ENCODE measurements at regions of chr12 and their contacts with region 1.

Region 1: DNA sequence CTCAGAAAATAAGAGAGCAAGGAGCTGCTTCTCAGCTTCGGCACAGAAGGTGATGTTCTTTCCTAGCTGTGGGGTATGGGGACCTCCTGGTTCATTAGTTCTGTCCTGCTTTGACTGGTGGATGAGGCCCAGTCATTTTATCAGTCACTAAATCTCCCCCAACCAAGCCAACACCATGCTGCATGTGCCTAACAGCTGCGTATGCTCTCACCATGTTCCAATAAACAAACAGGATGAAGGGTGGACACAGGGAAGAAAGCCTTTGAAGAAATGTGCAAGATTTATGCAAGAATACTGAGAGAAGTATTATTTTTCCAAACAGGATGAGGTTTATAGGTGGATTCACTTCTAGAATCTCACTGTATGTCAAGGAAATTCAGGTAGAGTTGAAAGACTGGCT is 156.2 kb downstream of the TMEM132C start:
- DNase-seq: no peak
- ATAC-seq: no peak
- H3K4me3 ChIP-seq: no peak overlapping the region
- H3K27ac ChIP-seq: no peak overlapping the region
- H3K4me1 ChIP-seq: no peaks in the 10 kb centered on the region
- H3K27me3 ChIP-seq: peaks cover 26% of the 10 kb centered on the region; the same call in 1 of the 2 replicates
- CTCF ChIP-seq: no peak

Region 2: GRCh38 chr12:127006972-127007371 is 1416.2 kb before region 1 on chr12:
- CTCF ChIA-PET with region 1: interaction called, 12 read pairs
- POLR2A ChIA-PET with region 1: no interaction called
- intact Hi-C with region 1: no loop called
- DNase-seq: no peak
- ATAC-seq: no peak
- H3K4me3 ChIP-seq: no peak overlapping the region
- H3K27ac ChIP-seq: no peak overlapping the region
- H3K4me1 ChIP-seq: no peaks in the 10 kb centered on the region
- H3K27me3 ChIP-seq: peaks cover 42% of the 10 kb centered on the region
- CTCF ChIP-seq: no peak

Region 3: DNA sequence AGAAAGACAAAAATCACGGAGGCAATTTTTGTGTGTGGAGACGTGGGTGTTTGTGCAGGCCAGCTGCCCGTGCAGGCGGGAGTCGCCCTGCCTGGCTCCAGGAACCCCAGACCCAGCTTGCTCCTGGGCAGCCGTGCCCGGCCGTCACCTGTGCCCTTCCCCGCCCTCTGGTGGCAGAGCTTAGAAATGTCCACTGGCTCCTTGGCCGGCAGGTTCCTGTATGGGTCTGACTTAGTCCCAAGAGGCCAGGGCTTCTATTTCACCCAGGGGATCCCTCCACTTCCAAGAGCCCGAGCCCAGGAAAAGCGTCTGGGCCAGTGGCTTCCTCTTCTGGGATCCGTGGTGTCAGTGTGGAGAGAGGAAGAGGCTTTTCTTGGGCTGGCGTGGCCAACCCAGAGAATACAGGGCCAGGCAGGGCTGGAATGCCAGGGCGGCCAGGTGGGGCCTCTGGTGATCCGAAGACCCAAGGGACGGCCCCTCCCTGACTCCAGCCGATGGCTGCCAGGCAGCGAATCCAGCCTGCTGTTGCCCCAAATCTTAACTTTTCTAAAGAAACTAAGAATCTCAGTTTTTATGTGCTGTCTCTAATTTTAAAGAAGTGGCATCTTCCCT is 35.3 kb before region 1 on chr12:
- CTCF ChIA-PET with region 1: no interaction called
- POLR2A ChIA-PET with region 1: no interaction called
- intact Hi-C with region 1: no loop called
- DNase-seq: peak; percentile 65
- ATAC-seq: peak; percentile 84
- H3K4me3 ChIP-seq: no peak overlapping the region
- H3K27ac ChIP-seq: no peak overlapping the region
- H3K4me1 ChIP-seq: no peaks in the 10 kb centered on the region
- H3K27me3 ChIP-seq: peaks cover 65% of the 10 kb centered on the region
- CTCF ChIP-seq: peak; percentile 77

Measured in PC-3 (cell line).